ENCODE measurements at regions of chr18 and their contacts with region 1.

Region 1: DNA sequence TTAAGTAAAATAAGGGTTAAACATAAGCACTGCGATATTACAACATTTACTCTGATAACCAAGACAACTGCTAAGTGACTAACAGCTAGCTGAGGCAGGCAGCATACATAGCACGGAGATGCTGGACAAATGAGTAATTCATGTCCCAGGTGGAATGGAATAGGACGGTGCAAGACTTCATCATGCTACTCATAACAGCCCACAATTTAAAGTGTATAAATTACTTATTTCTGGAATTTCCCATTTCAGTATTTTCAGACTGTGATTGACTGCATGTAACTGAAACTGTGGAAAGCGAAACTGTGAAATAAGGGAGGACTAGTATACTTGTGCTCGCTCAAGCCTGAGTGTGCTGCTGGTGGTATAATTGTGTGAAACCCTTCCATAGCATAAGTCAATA is 12.9 kb downstream of the IER3IP1 start:
- DNase-seq: no peak
- H3K4me3 ChIP-seq: no peak overlapping the region
- H3K27ac ChIP-seq: no peak overlapping the region
- H3K4me1 ChIP-seq: no peaks in the 10 kb centered on the region
- H3K27me3 ChIP-seq: no peaks in the 10 kb centered on the region
- CTCF ChIP-seq: no peak
- EP300 ChIP-seq: no peak
- POLR2A ChIP-seq: no peak
- RAD21 ChIP-seq: no peak

Region 2: DNA sequence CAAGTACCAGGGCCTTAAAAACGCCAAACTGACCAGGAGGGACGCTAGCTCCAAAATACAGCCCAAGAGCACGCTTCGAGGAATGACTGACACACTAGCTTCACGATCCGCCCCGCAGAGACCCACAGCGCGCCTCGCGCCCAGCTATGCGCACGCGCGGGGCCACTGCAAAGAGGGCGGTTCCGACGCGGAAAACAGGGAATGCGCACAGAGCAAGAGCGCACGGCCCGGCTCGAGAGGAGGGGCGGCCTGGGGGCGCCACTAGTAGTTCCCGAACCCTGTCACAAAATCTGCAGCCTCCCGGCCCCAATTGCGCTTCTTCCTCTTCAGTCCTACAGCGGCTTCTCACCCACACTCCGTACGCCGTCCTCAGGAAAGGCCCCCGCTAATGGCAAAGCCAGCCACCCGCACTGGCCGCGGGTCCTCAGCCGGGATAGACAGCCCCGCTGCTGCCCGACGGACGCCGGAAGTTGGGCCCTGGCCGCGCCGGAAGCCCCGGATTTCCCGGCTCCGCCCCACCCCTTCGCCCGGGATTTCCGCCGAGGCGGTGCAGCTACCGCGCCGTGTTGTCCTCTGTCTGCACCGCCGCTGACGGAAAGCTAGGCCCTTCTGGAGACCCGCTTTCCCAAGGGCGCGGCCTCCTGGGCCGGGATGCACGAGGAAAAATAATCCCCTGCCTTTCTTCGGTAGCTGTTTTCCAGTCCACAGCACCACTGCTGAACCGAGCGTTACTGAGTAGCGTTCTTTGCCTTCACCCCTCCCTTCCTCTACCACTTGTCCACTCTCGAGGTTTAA is 13.0 kb before region 1 on chr18 and contains the start of gene HDHD2:
- CTCF ChIA-PET with region 1: no interaction called
- POLR2A ChIA-PET with region 1: interaction called, 10 read pairs
- DNase-seq: peak; percentile 21 to 93
- H3K4me3 ChIP-seq: peak within 1 kb of the TSS; percentile 70 to 91 (median 86)
- H3K27ac ChIP-seq: peak within 1 kb of the TSS; percentile 76
- H3K4me1 ChIP-seq: peaks cover 0 to 2% (median 1%) of the 10 kb centered on the region in 4 experiments; a peak in 4 of 7 replicates
- H3K27me3 ChIP-seq: no peaks in the 10 kb centered on the region
- CTCF ChIP-seq: no peak
- EP300 ChIP-seq: no peak
- POLR2A ChIP-seq: peak; percentile 57 to 88
- RAD21 ChIP-seq: no peak
- total RNA-seq, gene HDHD2: 42.7 and 44.8 TPM in 2 replicates

Region 3: DNA sequence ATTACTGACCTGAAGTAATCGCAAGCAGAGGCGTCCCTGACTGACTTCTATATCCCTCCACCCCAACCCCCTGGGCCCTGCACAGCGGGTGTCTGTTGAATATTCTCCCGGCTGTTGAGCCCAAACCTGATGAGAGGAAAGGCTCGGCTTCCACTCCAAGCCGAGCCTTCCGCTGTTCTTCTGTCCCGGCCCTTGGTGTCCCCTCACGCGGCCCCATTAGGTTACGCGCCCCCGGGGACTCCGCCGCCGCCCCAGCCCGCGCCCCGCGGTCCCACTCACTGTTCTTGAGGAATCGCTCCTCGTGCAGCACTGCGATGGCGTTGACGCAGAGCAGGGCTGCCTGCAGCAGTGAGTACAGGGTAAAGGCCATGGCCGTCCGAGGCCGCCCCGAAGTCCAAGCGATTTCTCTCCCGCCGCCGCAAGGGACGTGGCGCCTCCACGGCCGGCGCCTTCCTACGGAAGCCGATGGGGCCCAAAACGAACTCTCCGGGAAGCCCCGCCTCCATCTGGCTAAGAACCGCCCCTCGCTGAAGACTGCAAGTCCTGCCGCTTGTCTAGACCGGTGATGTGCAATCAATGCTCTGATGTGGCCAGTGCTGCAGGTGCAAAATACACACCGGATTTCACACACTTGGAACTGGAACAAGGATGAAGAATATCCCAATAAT is 12.8 kb after region 1 on chr18 and contains the start of gene IER3IP1:
- CTCF ChIA-PET with region 1: no interaction called
- POLR2A ChIA-PET with region 1: no interaction called
- DNase-seq: peak in 1 of 2 experiments; percentile 94
- H3K4me3 ChIP-seq: peak within 1 kb of the TSS; percentile 82 to 95 (median 90)
- H3K27ac ChIP-seq: peak within 1 kb of the TSS; percentile 73; the same call in 1 of the 2 replicates
- H3K4me1 ChIP-seq: peaks cover 3 to 5% (median 4%) of the 10 kb centered on the region in 4 experiments; a peak in 5 of 7 replicates
- H3K27me3 ChIP-seq: no peaks in the 10 kb centered on the region
- CTCF ChIP-seq: no peak
- EP300 ChIP-seq: no peak
- POLR2A ChIP-seq: peak in 1 of 2 experiments; percentile 85; a peak in 2 of 3 replicates
- RAD21 ChIP-seq: peak in 1 of 2 experiments; percentile 9; a peak in 2 of 4 replicates
- total RNA-seq, gene IER3IP1: 7.9 and 8.5 TPM in 2 replicates

Region 4: DNA sequence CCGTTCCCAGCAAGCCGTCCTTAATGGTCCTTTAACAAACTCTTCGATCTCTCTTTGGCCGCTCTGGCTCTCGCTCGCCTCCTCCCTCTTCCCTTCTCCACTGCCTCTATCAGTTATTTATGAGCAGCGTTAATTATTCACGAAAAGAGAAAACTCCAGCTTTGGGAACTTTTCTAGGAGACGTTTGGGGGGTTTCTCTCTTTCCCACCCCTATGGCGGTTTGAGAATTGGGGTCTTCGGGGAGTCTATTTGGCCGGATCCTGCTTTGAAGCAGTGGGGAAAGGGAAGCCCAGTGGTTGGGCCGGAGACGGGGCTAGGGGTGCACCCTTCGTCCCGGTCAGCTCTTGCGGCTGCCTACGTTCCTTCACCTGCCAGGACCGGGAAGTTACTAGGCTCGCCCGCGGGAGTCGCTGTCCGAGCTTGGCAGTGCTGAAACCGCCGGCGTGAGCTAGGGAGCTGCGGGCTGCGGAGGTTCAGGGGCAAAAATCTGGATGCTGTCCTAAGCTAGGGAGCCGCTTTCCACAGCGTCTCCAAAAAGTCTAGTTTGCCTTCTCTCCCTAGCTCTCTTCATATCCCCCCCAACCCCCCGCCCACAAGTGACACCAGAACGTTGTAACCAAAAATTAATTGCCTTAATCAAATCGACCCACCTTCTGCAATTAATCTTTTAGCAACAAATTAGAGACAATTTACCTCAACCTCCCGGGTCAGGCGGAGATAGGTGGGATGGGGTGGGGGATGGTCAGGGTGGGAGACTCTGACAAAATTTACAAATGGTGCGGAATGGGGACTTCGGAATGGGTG is 97.1 kb after region 1 on chr18:
- CTCF ChIA-PET with region 1: no interaction called
- POLR2A ChIA-PET with region 1: no interaction called
- DNase-seq: peak in 1 of 2 experiments; percentile 95
- H3K4me3 ChIP-seq: peak overlapping the region in 1 of 4 experiments; percentile 84; a peak in 2 of 8 replicates
- H3K27ac ChIP-seq: no peak overlapping the region
- H3K4me1 ChIP-seq: peaks cover 8 to 28% (median 16%) of the 10 kb centered on the region in 4 experiments
- H3K27me3 ChIP-seq: peaks cover 71 to 100% (median 84%) of the 10 kb centered on the region in 4 experiments
- CTCF ChIP-seq: no peak
- EP300 ChIP-seq: no peak
- POLR2A ChIP-seq: no peak
- RAD21 ChIP-seq: peak; percentile 10 to 14; a peak in 2 of 4 replicates

Measured in H1 (cell line).